Keratinocyte (primary cell): ENCODE measurements at regions of chr6 and their contacts with region 1.

Region 1: DNA sequence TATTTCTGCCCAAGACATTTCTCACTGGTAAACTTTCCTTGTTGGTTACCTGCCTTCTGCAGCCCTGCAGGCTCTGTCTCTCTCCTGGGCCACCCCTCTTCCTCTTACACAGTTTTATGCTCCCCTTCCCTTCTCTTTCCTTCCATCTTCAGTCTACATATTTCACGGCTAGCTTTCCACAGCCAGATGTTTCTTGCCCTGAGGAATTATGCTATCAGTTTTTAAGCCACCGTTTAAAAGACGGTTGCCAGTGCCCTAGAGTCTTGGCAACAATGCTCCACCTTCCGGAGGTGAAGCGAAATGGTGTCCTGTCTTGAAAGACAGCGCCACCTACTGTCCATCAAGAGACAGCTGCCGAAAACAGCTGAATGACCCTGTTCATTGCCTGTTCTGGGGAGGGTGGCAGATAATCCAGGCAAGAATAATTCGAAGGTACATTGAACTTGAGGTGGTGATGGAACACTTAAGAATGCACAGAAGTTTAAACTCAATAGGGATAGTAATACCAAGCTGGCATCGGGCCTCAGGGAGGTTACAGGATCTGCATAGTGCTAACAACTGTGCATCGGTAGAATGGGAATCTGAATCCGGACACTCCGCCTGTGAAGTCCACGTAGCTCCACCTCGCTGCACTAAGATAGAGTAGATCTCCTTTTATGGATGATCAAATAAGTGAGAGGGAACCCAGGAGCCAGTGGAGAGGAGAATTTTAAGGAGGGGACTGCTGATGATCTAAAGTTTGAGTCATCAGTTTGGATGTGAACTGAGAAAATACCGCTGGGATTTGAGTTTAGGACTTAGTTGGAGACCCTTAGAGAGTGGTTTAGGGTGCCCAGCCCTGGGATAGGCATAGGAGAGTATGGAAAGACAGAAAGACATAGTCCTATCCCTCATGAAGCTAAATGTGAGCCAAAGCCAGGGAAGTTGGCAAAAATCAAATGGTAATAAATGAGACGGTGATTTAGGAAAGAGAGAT is 4.8 kb upstream of the TRIM40 start:
- DNase-seq: peak; percentile 57
- H3K4me3 ChIP-seq: peak overlapping the region in 1 of 3 experiments; percentile 39
- H3K27ac ChIP-seq: no peak overlapping the region
- H3K4me1 ChIP-seq: peaks cover 8% of the 10 kb centered on the region
- H3K27me3 ChIP-seq: peaks cover 49% of the 10 kb centered on the region
- CTCF ChIP-seq: peak; percentile 99 to 100 (median 100)

Region 2: DNA sequence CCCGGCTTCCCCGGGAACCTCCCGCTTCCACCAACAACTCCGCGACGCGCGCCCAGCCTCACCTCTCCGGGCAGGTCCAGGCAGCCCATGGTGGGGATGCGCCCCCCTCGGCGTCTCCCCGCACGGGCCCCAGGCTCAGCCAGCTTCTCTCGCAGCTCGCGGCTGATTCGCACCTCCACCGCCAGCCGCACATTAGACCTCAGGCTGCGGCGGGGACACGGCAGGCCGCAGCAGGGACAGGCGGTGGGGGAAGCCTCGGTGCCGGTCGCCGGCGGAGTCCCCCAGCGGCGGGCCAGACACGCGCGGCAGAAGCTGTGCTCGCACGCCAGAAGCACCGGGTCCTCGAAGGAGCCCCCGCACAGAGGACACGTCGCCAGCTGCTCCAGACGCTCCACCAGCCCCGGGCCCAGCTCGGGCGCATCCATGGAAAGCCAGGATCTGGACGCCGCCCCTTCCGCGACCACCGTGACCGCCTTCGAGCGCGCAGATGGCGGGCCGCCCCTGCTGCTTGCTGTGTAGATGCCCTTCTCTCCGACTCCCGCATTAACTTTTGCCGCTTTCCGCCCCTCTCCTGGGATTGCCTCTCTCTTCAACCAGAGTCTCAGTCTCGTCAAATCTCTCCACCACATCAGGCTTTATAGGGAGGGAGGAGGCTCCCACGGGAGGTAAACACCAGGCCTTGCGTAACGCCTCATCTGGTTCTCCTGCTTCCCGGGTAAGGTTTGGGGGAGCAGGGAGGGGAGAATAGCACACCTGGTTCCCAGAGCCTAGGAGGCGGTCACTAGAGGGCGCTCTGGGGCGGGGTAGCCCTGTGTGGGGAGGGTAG is 55.8 kb before region 1 on chr6 and contains the start of gene RNF39:
- dilution Hi-C with region 1: loop called (anchors 10 kb)
- DNase-seq: no peak
- H3K4me3 ChIP-seq: peak within 1 kb of the TSS; percentile 59 to 90 (median 77)
- H3K27ac ChIP-seq: peak within 1 kb of the TSS; percentile 63
- H3K4me1 ChIP-seq: peaks cover 15% of the 10 kb centered on the region
- H3K27me3 ChIP-seq: peaks cover 4% of the 10 kb centered on the region
- CTCF ChIP-seq: peak in 2 of 3 experiments; percentile 48 to 63
- polyA plus RNA-seq, gene RNF39: 2.8 to 4.4 TPM (median 4.2 TPM) in 3 replicates